ENCODE measurements at regions of chr14 and their contacts with region 1.

Region 1: DNA sequence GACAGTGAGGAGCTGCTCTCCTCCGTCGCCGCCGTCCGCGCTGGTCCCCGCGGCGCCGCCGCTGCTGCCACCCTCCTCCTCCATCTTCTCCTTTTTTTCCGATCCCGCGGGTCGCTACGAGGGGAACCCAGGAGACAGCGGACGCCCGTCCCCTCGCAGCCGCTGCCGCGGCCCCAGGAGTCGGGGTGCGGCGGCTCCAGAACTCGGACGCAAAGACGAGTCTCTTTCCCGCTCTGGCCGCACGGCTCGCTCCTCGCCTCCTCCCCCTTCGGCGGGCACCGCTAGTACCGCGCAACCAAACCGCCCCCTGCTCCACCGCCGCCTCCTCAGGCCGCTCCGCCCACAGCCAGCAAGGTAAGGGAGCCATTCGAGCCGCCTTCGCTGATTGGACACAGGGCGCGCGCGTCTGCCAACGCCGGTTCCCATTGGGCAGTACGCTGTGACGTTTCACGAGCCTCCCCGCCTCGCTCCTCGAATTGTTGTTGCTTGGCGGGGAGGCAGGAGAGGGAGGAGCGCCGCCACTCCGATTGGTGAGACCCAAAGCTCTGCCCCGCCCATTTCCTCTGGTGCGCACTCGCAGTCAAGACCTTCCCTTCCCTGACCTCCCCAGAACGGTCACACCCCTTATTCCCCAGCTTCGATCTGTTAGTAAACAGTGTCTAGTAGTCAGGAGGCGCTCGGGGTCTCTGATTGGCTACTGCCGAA is at the start of gene RPS6KA5:
- DNase-seq: peak; percentile 99 to 100 (median 100)
- ATAC-seq: peak; percentile 82
- H3K4me3 ChIP-seq: peak within 1 kb of the TSS; percentile 66 to 84
- H3K4me3 Mint-ChIP-seq: peak within 1 kb of the TSS; percentile 81
- H3K27ac ChIP-seq: peak within 1 kb of the TSS; percentile 94 to 96
- H3K27ac Mint-ChIP-seq: peak within 1 kb of the TSS; percentile 35
- H3K4me1 ChIP-seq: peaks cover 38% of the 10 kb centered on the region
- H3K4me1 Mint-ChIP-seq: peaks cover 55% of the 10 kb centered on the region
- H3K27me3 ChIP-seq: no peaks in the 10 kb centered on the region
- H3K27me3 Mint-ChIP-seq: no peaks in the 10 kb centered on the region
- CTCF ChIP-seq: no peak
- total RNA-seq, gene RPS6KA5: 17.7 to 18.3 TPM

Region 2: DNA sequence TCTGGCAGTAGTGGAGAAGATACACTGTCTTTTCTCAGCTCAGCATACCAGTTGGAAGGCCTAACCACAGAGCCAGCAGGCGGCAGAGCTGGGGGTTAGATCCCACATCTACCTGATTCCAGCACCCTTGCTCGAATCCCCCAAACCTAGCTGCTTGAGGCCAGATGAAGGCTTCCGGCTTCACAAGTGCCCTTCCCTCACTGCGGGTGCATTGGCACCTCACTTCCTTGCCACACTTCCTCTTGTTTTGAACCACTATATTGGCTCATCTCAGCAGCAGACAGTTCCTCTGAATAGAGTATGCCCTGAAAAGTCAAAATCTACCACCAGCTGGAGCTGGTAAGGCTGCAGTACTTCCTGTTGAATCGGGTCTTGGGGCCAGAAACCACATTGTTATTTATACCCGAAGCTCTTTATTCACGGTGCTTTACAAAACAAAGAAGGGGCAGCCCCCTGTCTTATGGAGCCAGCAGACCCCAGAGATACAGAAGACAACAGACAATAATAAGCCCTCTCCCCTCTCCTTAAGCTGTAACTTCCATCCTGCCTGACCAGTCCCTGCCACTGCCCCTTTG is 1339.7 kb before region 1 on chr14:
- CTCF ChIA-PET with region 1: no interaction called
- POLR2A ChIA-PET with region 1: no interaction called
- intact Hi-C with region 1: no loop called
- DNase-seq: peak; percentile 63 to 96 (median 77)
- ATAC-seq: peak; percentile 89
- H3K4me3 ChIP-seq: peak overlapping the region; percentile 17 to 29
- H3K4me3 Mint-ChIP-seq: peak overlapping the region; percentile 64
- H3K27ac ChIP-seq: peak overlapping the region; percentile 70 to 89
- H3K27ac Mint-ChIP-seq: peak overlapping the region; percentile 97
- H3K4me1 ChIP-seq: peaks cover 86% of the 10 kb centered on the region
- H3K4me1 Mint-ChIP-seq: peaks cover 85% of the 10 kb centered on the region
- H3K27me3 ChIP-seq: no peaks in the 10 kb centered on the region
- H3K27me3 Mint-ChIP-seq: no peaks in the 10 kb centered on the region
- CTCF ChIP-seq: no peak

Region 3: DNA sequence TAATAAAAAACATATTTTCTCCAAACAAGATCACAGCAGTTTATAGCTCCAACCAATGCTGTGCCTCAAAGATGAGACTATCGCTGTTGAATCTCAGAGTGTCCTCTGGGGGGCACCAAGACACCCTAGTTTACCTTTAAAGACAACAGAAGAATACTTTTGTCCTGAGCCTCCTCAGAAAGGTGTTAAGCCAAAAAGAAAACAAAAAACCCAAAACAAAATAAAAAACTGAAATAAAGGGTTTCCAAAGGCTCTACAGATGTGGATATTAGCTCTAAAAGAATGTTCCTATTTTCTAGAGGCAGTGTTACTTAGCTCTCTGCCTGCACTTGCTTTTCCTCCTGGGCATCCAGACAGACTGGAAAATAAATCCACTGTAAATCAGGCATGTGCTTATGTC is 157.4 kb before region 1 on chr14:
- CTCF ChIA-PET with region 1: interaction called, 11 read pairs
- POLR2A ChIA-PET with region 1: interaction called, 3 read pairs
- intact Hi-C with region 1: loop called in 1 of 2 experiments (anchors 5 kb)
- DNase-seq: peak; percentile 12 to 77 (median 59)
- ATAC-seq: peak; percentile 83
- H3K4me3 ChIP-seq: no peak overlapping the region
- H3K4me3 Mint-ChIP-seq: no peak overlapping the region
- H3K27ac ChIP-seq: no peak overlapping the region
- H3K27ac Mint-ChIP-seq: no peak overlapping the region
- H3K4me1 ChIP-seq: no peaks in the 10 kb centered on the region
- H3K4me1 Mint-ChIP-seq: no peaks in the 10 kb centered on the region
- H3K27me3 ChIP-seq: no peaks in the 10 kb centered on the region
- H3K27me3 Mint-ChIP-seq: no peaks in the 10 kb centered on the region
- CTCF ChIP-seq: peak; percentile 83

Region 4: GRCh38 chr14:91047174-91047753 is 13.2 kb before region 1 on chr14:
- CTCF ChIA-PET with region 1: interaction called, 6 read pairs
- POLR2A ChIA-PET with region 1: interaction called, 25 read pairs
- intact Hi-C with region 1: no loop called
- DNase-seq: peak in 2 of 9 experiments; percentile 46 to 63
- ATAC-seq: peak; percentile 44
- H3K4me3 ChIP-seq: no peak overlapping the region
- H3K4me3 Mint-ChIP-seq: no peak overlapping the region
- H3K27ac ChIP-seq: no peak overlapping the region
- H3K27ac Mint-ChIP-seq: no peak overlapping the region
- H3K4me1 ChIP-seq: peaks cover 22% of the 10 kb centered on the region
- H3K4me1 Mint-ChIP-seq: peaks cover 45% of the 10 kb centered on the region
- H3K27me3 ChIP-seq: no peaks in the 10 kb centered on the region
- H3K27me3 Mint-ChIP-seq: no peaks in the 10 kb centered on the region
- CTCF ChIP-seq: no peak

Region 5: DNA sequence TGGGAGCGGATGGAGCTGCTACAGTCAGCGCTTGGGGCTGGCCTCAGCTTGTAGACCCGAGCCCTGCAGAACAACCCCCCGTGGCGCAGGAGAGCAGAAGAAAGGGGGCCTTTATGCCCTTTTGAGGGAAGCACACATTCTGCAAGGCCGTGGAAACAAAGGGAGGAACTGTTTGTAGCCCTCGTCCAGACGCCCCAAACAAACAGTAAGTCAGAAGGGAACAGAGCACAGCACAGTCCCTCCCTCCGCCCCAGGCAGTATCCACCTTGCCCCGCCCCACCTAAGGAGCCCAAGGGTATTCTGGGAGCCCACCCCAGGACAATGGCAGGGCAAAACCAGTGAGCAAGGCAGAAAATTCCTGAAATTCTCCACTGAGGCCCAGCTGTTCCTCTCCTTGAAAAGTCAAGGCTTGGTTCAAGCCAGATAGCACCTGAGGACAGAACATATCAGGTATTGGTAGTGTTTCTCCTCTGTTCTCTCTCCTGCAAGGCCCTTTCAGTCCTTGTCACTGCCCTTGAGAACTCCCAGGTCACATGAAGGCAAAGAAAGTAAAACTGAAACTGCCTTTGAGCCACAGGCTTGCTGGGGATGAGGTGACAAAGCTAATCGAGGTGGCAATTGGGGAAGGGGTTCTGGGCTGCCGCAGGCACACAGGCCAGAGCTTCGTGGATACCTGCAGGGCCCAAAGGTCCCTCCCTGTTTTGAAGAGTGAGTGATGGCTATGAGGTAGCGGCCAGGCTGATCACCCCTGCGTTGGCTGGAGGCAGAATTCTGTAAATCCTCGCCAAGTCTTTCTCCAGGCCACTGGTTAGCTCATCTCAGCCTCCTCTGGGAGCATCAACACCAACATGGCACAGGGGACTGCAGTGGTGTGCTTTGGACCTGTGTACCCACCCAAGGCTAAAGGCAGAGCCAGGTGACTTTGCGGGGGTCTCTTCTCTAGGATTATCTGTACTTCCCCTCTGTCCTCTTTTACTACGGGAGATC is 53.9 kb after region 1 on chr14:
- CTCF ChIA-PET with region 1: interaction called, 16 read pairs
- POLR2A ChIA-PET with region 1: interaction called, 70 read pairs
- intact Hi-C with region 1: loop called (anchors 1 kb)
- DNase-seq: peak; percentile 22 to 89 (median 65)
- ATAC-seq: peak; percentile 78
- H3K4me3 ChIP-seq: peak overlapping the region; percentile 68 to 93
- H3K4me3 Mint-ChIP-seq: peak overlapping the region; percentile 90
- H3K27ac ChIP-seq: peak overlapping the region; percentile 84 to 88
- H3K27ac Mint-ChIP-seq: peak overlapping the region; percentile 95
- H3K4me1 ChIP-seq: peaks cover 61% of the 10 kb centered on the region
- H3K4me1 Mint-ChIP-seq: peaks cover 68% of the 10 kb centered on the region
- H3K27me3 ChIP-seq: no peaks in the 10 kb centered on the region
- H3K27me3 Mint-ChIP-seq: no peaks in the 10 kb centered on the region
- CTCF ChIP-seq: no peak

Region 6: DNA sequence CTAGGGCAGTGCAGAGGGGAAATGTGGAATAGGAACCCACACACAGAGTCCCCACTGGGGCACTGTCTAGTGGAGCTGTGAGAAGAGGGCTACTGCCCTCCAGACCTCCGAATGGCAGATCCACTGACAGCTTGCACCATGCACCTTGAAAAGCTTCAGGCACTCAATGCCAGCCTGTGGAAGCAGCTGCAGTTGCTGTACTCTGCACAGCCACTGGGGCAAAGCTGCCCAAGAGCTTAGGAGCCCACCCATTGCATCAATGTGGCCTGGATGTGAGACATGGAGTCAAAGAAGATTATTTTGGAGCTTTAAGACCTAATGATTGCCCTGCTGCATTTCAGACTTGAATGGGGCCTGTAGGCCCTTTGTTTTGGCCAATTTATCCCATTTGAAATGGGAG is 378.8 kb after region 1 on chr14:
- CTCF ChIA-PET with region 1: no interaction called
- POLR2A ChIA-PET with region 1: no interaction called
- intact Hi-C with region 1: no loop called
- DNase-seq: no peak
- ATAC-seq: no peak
- H3K4me3 ChIP-seq: no peak overlapping the region
- H3K4me3 Mint-ChIP-seq: no peak overlapping the region
- H3K27ac ChIP-seq: no peak overlapping the region
- H3K27ac Mint-ChIP-seq: no peak overlapping the region
- H3K4me1 ChIP-seq: no peaks in the 10 kb centered on the region
- H3K4me1 Mint-ChIP-seq: no peaks in the 10 kb centered on the region
- H3K27me3 ChIP-seq: peaks cover 0 to 5% of the 10 kb centered on the region in 2 experiments
- H3K27me3 Mint-ChIP-seq: peaks cover 2% of the 10 kb centered on the region
- CTCF ChIP-seq: no peak

Region 7: GRCh38 chr14:91510174-91511042 is 449.9 kb after region 1 on chr14 and contains the start of gene PPP4R3A:
- CTCF ChIA-PET with region 1: no interaction called
- POLR2A ChIA-PET with region 1: no interaction called
- intact Hi-C with region 1: loop called (anchors 1 to 5 kb)
- DNase-seq: peak; percentile 84 to 99 (median 93)
- ATAC-seq: peak; percentile 86
- H3K4me3 ChIP-seq: peak within 1 kb of the TSS; percentile 48 to 96
- H3K4me3 Mint-ChIP-seq: peak within 1 kb of the TSS; percentile 100
- H3K27ac ChIP-seq: peak within 1 kb of the TSS; percentile 94 to 98
- H3K27ac Mint-ChIP-seq: peak within 1 kb of the TSS; percentile 100
- H3K4me1 ChIP-seq: peaks cover 26% of the 10 kb centered on the region
- H3K4me1 Mint-ChIP-seq: peaks cover 32% of the 10 kb centered on the region
- H3K27me3 ChIP-seq: no peaks in the 10 kb centered on the region
- H3K27me3 Mint-ChIP-seq: no peaks in the 10 kb centered on the region
- CTCF ChIP-seq: no peak
- total RNA-seq, gene PPP4R3A: 279 to 285 TPM

Region 8: DNA sequence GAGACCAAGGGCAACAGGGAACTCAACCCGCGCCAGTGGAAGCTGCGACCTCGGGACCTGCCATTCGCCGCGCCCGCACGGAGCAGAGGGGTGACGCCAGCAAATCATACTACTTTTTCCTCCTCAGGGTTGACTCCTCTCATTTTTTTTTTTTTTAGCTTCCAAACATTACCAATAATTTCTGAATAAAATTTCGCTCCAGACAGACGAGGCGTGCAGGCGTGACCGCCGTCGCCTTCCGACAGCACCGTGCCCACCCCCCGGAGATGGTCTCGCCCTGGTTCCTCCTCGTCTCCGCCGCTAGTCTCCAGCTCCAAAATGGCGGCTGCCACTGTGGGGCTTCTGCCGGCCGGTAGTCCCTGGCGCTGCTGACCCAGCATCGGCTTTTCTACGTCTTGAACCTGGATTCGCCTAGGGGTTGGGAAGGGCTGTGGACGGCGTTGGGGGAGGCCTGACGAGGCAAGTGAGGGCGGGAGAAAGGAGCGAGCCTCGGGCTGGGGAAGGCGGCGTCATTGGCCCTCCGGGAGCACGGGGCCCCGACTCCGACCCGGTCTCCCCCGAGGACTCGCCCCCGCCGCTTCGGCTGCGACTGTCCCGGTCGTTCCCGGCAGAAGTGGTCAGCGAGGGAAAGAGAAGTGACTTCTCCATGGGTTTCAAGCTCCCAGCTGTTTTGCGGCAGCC is 1061.3 kb after region 1 on chr14 and contains the starts of genes CPSF2 and NDUFB1:
- CTCF ChIA-PET with region 1: no interaction called
- POLR2A ChIA-PET with region 1: interaction called, 3 read pairs
- intact Hi-C with region 1: loop called in 1 of 2 experiments (anchors 5 kb)
- DNase-seq: peak; percentile 70 to 90 (median 83)
- ATAC-seq: peak; percentile 85
- H3K4me3 ChIP-seq: peak within 1 kb of the TSS; percentile 81 to 86
- H3K4me3 Mint-ChIP-seq: peak within 1 kb of the TSS; percentile 99
- H3K27ac ChIP-seq: peak within 1 kb of the TSS; percentile 88 to 89
- H3K27ac Mint-ChIP-seq: peak within 1 kb of the TSS; percentile 99
- H3K4me1 ChIP-seq: peaks cover 31% of the 10 kb centered on the region
- H3K4me1 Mint-ChIP-seq: peaks cover 55% of the 10 kb centered on the region
- H3K27me3 ChIP-seq: no peaks in the 10 kb centered on the region
- H3K27me3 Mint-ChIP-seq: no peaks in the 10 kb centered on the region
- CTCF ChIP-seq: no peak
- total RNA-seq, gene CPSF2: 12.1 to 14.2 TPM
- total RNA-seq, gene NDUFB1: 38.5 to 43.9 TPM